CD8-positive, alpha-beta memory T cell (primary cell): ENCODE measurements at regions of chr4 and their contacts with region 1.

Region 1: GRCh38 chr4:108650212-108651013 is at the start of gene OSTC:
- DNase-seq: peak; percentile 90 to 94 (median 91)
- H3K4me3 ChIP-seq: peak within 1 kb of the TSS; percentile 90
- H3K4me3 Mint-ChIP-seq: peak within 1 kb of the TSS; percentile 94 to 99 (median 98)
- H3K27ac ChIP-seq: peak within 1 kb of the TSS; percentile 94
- H3K27ac Mint-ChIP-seq: peak within 1 kb of the TSS; percentile 96 to 100 (median 98)
- H3K4me1 ChIP-seq: peaks cover 14% of the 10 kb centered on the region
- H3K4me1 Mint-ChIP-seq: peaks cover 36 to 51% (median 46%) of the 10 kb centered on the region in 3 donors
- H3K27me3 ChIP-seq: no peaks in the 10 kb centered on the region
- H3K27me3 Mint-ChIP-seq: no peaks in the 10 kb centered on the region
- total RNA-seq, gene OSTC: 90.8 to 93.1 TPM

Region 2: GRCh38 chr4:108581083-108581482 is 69.3 kb before region 1 on chr4:
- CTCF ChIA-PET with region 1: no interaction called
- POLR2A ChIA-PET with region 1: no interaction called
- DNase-seq: no peak
- H3K4me3 ChIP-seq: no peak overlapping the region
- H3K4me3 Mint-ChIP-seq: no peak overlapping the region
- H3K27ac ChIP-seq: no peak overlapping the region
- H3K27ac Mint-ChIP-seq: peak overlapping the region in 1 of 8 donors; percentile 21
- H3K4me1 ChIP-seq: no peaks in the 10 kb centered on the region
- H3K4me1 Mint-ChIP-seq: no peaks in the 10 kb centered on the region
- H3K27me3 ChIP-seq: no peaks in the 10 kb centered on the region
- H3K27me3 Mint-ChIP-seq: no peaks in the 10 kb centered on the region

Region 3: DNA sequence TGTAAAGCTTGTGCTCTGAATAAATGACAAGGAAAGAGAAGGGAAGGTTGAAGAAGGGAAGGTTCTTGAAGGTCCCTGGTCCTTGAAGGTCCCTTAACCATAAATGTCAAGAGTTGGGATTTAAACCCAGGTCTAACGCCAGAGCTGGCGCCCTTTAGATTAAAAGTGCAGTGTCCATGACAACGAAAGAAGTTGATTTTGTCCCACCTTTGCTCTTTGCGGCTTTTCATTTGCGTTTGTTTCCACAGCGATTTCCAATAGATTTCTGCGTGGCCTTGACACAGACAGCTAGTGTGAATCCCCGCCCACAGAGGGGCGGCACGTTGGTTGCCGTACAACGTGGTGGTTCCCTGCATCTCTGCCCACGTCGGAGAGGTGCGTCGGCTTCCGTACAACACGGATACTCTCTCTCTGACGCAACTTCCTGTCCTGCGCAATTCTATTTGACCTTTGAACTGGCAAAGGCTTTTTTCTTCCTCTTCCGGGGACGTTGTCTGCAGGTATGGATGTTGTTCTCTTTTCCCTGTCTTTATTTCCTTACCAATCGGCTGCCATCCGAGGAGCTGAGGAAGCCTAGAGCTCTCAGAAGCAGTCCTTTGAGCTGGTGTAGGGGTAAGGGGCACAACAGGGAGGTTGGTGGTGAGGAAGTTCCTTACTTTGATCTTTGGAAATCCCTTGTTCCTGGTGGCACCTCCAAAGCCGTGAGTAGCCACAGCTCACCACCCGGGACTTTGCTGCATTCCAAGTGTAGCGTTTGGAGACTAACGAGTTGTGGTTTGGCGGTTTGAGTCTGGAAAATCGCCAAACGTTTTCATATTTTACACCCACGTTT is 30.1 kb before region 1 on chr4 and contains the start of gene RPL34:
- CTCF ChIA-PET with region 1: interaction called, 3 read pairs
- POLR2A ChIA-PET with region 1: interaction called, 20 read pairs
- DNase-seq: peak; percentile 94 to 98 (median 95)
- H3K4me3 ChIP-seq: peak within 1 kb of the TSS; percentile 93
- H3K4me3 Mint-ChIP-seq: peak within 1 kb of the TSS; percentile 87 to 98 (median 96)
- H3K27ac ChIP-seq: peak within 1 kb of the TSS; percentile 92
- H3K27ac Mint-ChIP-seq: peak within 1 kb of the TSS; percentile 89 to 99 (median 94)
- H3K4me1 ChIP-seq: peaks cover 33% of the 10 kb centered on the region
- H3K4me1 Mint-ChIP-seq: peaks cover 46 to 61% (median 56%) of the 10 kb centered on the region in 3 donors
- H3K27me3 ChIP-seq: no peaks in the 10 kb centered on the region
- H3K27me3 Mint-ChIP-seq: peaks cover 0 to 4% of the 10 kb centered on the region in 2 donors
- total RNA-seq, gene RPL34: 1,392 to 1,416 TPM

Region 4: DNA sequence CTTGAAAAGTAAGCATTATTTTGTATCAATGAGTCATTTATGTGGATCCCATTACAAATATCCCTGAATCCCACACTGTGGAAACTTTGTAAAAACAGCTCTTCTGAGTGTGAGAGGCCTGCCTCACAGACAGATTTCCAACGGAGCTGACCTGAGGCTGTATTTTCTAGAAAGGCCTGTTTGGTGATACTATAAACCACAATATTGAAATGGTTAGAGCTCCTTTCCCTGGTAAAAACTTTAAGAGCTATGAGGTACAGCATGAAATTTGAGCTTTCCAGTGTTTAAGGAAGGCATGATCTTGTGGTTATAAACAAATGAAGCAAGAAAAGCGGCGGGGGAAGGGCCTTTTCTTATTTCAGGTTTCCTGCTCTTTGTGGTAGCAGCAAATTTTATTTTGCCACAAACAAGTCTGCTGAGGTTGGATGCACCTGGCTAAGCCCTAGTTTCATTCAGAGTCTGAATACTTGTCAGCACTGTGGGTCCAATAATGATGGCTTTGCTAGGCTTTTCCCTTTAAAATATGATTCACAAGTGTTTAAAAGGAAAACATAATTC is 199.3 kb after region 1 on chr4:
- CTCF ChIA-PET with region 1: no interaction called
- POLR2A ChIA-PET with region 1: no interaction called
- DNase-seq: no peak
- H3K4me3 ChIP-seq: no peak overlapping the region
- H3K4me3 Mint-ChIP-seq: no peak overlapping the region
- H3K27ac ChIP-seq: no peak overlapping the region
- H3K27ac Mint-ChIP-seq: no peak overlapping the region
- H3K4me1 ChIP-seq: no peaks in the 10 kb centered on the region
- H3K4me1 Mint-ChIP-seq: peaks cover 0 to 3% (median 0%) of the 10 kb centered on the region in 3 donors
- H3K27me3 ChIP-seq: no peaks in the 10 kb centered on the region
- H3K27me3 Mint-ChIP-seq: peaks cover 6 to 24% of the 10 kb centered on the region in 2 donors